ENCODE measurements at regions of chr3 and their contacts with region 1.

Region 1: DNA sequence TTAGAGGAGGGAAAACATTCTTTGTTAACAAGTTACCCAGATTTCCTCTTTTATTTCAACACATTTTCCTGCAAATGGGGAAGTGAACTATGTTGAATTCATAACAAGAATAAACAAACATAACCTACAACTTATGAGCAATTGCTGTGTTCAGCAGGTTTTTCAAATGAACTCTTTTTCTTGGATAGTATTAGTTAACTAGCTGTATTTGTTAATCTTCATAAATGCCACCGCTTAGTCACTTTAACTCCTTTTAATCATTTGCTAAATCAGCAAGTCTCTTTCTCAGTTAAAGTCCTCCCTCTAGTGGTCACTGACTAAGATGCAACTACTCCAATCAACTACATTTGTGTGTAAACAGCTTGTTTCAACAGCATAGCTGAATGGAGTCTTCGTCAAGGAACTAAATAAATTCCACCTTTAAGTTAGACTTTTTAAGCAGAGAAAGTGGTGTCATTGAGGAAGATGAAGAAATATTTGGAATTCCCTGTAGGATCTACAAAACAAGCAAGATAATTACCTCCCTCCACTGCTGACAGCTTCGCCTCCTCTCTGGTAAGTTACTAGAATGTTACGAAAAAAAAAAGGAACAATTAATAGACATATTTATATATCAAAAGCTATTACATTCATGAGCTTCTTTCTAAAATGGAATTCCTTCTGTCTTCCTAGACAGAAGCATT is 1122.0 kb downstream of the ROBO1 start:
- DNase-seq: peak; percentile 7 to 65
- H3K4me3 ChIP-seq: no peak overlapping the region
- H3K27ac ChIP-seq: no peak overlapping the region
- H3K4me1 ChIP-seq: no peaks in the 10 kb centered on the region
- H3K27me3 ChIP-seq: no peaks in the 10 kb centered on the region
- CTCF ChIP-seq: peak; percentile 93

Region 2: GRCh38 chr3:77038468-77038929 is 1607.3 kb before region 1 on chr3:
- CTCF ChIA-PET with region 1: interaction called, 9 read pairs
- POLR2A ChIA-PET with region 1: no interaction called
- intact Hi-C with region 1: loop called (anchors 1 kb)
- DNase-seq: peak in 1 of 2 experiments; percentile 45
- H3K4me3 ChIP-seq: no peak overlapping the region
- H3K27ac ChIP-seq: no peak overlapping the region
- H3K4me1 ChIP-seq: no peaks in the 10 kb centered on the region
- H3K27me3 ChIP-seq: peaks cover 7% of the 10 kb centered on the region; the same call in 1 of the 2 replicates
- CTCF ChIP-seq: peak; percentile 62

Region 3: GRCh38 chr3:77348231-77348855 is 1297.4 kb before region 1 on chr3:
- CTCF ChIA-PET with region 1: no interaction called
- POLR2A ChIA-PET with region 1: no interaction called
- intact Hi-C with region 1: loop called (anchors 10 kb)
- DNase-seq: peak in 1 of 2 experiments; percentile 23
- H3K4me3 ChIP-seq: no peak overlapping the region
- H3K27ac ChIP-seq: no peak overlapping the region
- H3K4me1 ChIP-seq: no peaks in the 10 kb centered on the region
- H3K27me3 ChIP-seq: no peaks in the 10 kb centered on the region
- CTCF ChIP-seq: 0 out of 2 replicates have a peak, but pooled peaks have one; percentile 16

Region 4: DNA sequence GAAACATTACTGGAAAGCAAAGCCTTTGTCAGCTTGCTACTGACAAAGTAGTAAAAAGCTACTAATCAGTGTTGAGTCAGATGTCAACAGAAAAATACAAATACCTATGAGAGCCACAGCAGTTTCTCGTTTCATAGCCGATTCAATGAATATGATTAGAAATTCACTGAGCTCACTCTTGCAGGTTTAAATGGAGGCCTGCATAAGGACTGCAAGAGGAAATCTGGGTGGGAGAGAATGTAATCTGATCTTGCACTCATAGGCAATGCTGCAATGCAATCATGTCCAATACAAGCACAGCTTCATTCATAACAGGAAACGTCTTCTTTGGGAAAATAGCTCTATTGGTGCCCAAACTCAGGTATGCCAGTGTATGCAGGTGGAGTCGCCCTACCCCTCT is 997.1 kb before region 1 on chr3:
- CTCF ChIA-PET with region 1: no interaction called
- POLR2A ChIA-PET with region 1: no interaction called
- intact Hi-C with region 1: no loop called
- DNase-seq: no peak
- H3K4me3 ChIP-seq: no peak overlapping the region
- H3K27ac ChIP-seq: no peak overlapping the region
- H3K4me1 ChIP-seq: no peaks in the 10 kb centered on the region
- H3K27me3 ChIP-seq: no peaks in the 10 kb centered on the region
- CTCF ChIP-seq: no peak

Region 5: DNA sequence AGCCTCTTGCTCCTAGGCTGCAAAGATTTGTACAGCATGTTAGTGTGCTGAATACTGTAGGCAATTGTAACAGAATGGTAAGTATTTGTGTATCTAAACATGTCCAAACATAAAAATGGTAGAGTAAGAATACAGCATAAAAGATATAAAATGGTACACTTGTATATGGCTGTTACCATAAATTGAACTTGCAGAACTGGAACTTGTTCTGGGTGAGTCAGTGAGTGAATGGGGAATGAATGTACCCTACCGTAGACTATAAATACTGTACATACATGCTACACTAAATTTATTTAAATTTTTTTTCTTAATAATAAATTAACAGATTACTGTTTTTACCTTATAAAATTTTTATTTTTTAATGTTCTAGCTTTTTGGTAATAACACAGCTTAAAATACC is 747.1 kb before region 1 on chr3:
- CTCF ChIA-PET with region 1: interaction called, 11 read pairs
- POLR2A ChIA-PET with region 1: no interaction called
- intact Hi-C with region 1: no loop called
- DNase-seq: no peak
- H3K4me3 ChIP-seq: no peak overlapping the region
- H3K27ac ChIP-seq: no peak overlapping the region
- H3K4me1 ChIP-seq: no peaks in the 10 kb centered on the region
- H3K27me3 ChIP-seq: no peaks in the 10 kb centered on the region
- CTCF ChIP-seq: no peak

Region 6: DNA sequence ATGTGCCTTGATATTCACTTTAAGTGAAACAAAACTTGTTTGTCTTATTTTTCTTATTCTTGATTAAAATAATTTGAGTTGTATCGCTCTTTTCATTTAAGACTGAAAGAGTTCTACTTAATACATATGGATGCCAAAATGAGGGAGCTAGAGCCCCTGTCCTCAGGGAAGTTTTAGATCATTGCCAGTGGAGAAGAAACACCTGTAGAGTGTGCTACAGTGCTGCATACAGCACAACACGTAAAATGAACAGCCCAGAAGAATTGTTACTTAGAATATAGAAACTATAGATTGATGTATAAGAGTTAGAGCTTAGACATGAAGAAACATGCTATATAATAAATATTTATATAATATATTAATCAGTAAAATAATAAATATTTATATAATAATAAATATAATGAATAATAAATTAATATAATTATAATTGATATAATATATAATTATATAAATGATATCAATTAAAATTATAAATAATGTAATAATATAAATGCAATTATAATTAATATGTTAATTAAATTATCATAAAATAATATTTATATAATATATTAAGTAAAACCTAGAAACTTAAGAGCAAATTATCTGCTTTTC is 371.2 kb before region 1 on chr3:
- CTCF ChIA-PET with region 1: no interaction called
- POLR2A ChIA-PET with region 1: no interaction called
- intact Hi-C with region 1: loop called (anchors 5 kb)
- DNase-seq: no peak
- H3K4me3 ChIP-seq: no peak overlapping the region
- H3K27ac ChIP-seq: no peak overlapping the region
- H3K4me1 ChIP-seq: no peaks in the 10 kb centered on the region
- H3K27me3 ChIP-seq: no peaks in the 10 kb centered on the region
- CTCF ChIP-seq: no peak

Region 7: GRCh38 chr3:78506581-78507195 is 139.1 kb before region 1 on chr3:
- CTCF ChIA-PET with region 1: interaction called, 4 read pairs
- POLR2A ChIA-PET with region 1: no interaction called
- intact Hi-C with region 1: loop called (anchors 1 kb)
- DNase-seq: peak; percentile 58 to 80
- H3K4me3 ChIP-seq: no peak overlapping the region
- H3K27ac ChIP-seq: peak overlapping the region; percentile 35; the same call in 1 of the 2 replicates
- H3K4me1 ChIP-seq: peaks cover 10% of the 10 kb centered on the region; the same call in 1 of the 2 replicates
- H3K27me3 ChIP-seq: no peaks in the 10 kb centered on the region
- CTCF ChIP-seq: no peak

Region 8: GRCh38 chr3:78804251-78805037 is 158.7 kb after region 1 on chr3:
- CTCF ChIA-PET with region 1: no interaction called
- POLR2A ChIA-PET with region 1: no interaction called
- intact Hi-C with region 1: no loop called
- DNase-seq: no peak
- H3K4me3 ChIP-seq: no peak overlapping the region
- H3K27ac ChIP-seq: no peak overlapping the region
- H3K4me1 ChIP-seq: no peaks in the 10 kb centered on the region
- H3K27me3 ChIP-seq: no peaks in the 10 kb centered on the region
- CTCF ChIP-seq: no peak